ENCODE measurements at regions of chr15 and their contacts with region 1.

Region 1: GRCh38 chr15:68229386-68230156 is at the start of gene CLN6:
- DNase-seq: peak; percentile 73
- H3K4me3 Mint-ChIP-seq: peak within 1 kb of the TSS; percentile 94
- H3K27ac Mint-ChIP-seq: peak within 1 kb of the TSS; percentile 96
- H3K4me1 Mint-ChIP-seq: peaks cover 40% of the 10 kb centered on the region
- H3K27me3 Mint-ChIP-seq: no peaks in the 10 kb centered on the region
- total RNA-seq, gene CLN6: 95.3 and 98.3 TPM in 2 replicates

Region 2: DNA sequence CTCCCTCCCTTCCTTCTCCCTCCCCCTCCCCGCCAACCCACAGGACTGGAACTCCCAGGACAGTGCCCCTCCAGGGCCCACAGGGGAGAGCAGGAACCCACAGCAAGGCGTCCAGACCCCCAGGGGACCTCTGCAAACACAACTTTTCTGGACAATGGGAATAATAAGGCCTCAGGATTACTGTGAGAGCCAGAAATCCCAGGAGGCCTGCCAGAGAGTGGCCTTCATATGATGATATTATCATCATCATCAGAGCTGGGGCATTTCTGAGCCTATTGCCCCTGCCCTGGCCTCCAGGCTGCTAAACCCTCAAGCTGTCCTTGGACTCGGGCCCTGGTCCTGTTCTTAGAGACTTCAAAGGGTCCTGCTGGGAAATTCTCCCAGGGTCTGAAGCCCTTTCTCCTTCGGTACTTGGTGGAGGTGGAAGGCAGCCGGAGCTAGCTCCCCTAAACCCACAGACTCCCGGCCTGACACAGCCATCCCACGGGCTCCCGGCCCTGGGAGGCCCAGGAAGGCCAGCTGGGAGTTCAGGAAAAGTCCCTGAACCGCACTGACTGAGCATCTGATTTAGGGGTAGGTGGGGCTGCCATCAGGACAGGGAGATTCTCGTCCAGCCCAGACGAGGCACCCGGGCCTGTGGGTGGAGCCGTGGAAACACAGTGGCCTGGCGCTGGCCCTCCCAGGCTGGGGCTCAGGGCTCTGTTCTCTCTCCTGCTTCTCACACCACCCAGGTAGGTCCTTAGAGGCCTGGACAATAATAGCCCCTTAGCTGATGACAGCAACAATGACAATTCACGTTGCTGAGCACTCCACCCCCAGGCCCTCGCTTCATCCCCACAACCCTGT is 29.3 kb before region 1 on chr15:
- intact Hi-C with region 1: no loop called
- DNase-seq: no peak
- H3K4me3 Mint-ChIP-seq: no peak overlapping the region
- H3K27ac Mint-ChIP-seq: no peak overlapping the region
- H3K4me1 Mint-ChIP-seq: peaks cover 18% of the 10 kb centered on the region
- H3K27me3 Mint-ChIP-seq: no peaks in the 10 kb centered on the region

Region 3: GRCh38 chr15:68210821-68211655 is 18.5 kb before region 1 on chr15:
- intact Hi-C with region 1: loop called (anchors 2 kb)
- DNase-seq: peak; percentile 36
- H3K4me3 Mint-ChIP-seq: no peak overlapping the region
- H3K27ac Mint-ChIP-seq: no peak overlapping the region
- H3K4me1 Mint-ChIP-seq: peaks cover 35% of the 10 kb centered on the region
- H3K27me3 Mint-ChIP-seq: no peaks in the 10 kb centered on the region

Region 4: DNA sequence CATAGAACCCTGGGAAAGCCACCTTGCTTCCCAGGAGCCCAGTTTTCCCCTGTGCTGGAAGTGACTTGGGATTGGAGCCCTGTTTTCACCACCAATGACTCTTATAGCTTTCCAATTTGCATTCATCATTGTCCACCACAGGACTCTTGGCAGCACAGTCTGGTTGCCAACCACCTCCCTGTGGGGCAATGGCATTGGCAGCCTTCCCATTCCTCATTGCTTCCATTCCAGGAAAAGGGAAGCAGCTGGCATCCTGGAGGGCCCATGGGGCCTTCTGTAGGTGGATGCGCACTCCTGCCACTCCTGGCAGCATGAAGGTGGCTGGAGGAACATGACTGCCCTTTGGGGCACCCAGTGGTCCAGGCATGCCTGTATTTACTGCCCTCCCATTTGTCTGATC is 105.7 kb after region 1 on chr15:
- intact Hi-C with region 1: no loop called
- DNase-seq: no peak
- H3K4me3 Mint-ChIP-seq: no peak overlapping the region
- H3K27ac Mint-ChIP-seq: no peak overlapping the region
- H3K4me1 Mint-ChIP-seq: peaks cover 5% of the 10 kb centered on the region
- H3K27me3 Mint-ChIP-seq: peaks cover 12% of the 10 kb centered on the region

Region 5: DNA sequence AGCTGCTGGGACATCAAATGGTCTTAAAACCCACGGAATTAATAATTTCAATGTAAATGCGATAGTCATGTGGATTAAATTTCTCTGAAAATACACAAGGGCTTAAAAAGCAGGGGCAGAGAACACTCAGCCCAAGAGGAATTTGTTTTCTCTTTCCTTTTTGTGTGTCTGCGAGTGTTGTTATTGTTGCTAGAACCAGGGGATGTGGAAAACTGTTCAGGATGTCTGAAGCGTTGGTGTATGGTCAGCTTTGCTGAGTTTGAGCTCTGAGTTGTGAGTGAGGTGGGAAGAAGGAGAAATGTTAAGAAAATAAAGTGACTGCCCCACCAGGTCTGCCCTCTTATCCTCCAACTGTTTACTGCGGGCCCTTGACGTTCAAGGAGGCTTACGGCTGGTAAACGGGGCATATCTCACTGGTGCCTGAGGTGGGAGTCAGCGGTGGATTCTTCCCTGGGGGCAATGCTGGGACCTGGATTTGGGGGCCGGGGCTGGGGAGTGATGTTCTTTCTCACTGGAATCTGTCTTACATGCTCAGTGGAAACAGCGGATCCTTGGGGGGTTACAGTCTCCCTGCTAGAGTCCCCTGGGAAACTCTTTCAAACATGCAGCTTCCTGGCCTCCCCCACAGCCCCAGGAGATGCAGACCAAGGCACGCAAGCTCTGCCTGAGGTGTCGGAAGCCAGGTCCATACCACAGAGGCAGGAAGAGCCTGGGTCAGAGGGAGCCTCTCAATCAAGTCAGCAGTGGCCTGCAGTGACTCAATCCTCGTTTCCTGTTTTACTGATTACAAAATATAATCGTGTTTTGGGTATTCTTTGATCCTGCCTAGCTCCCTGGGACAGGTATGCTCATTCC is 160.6 kb after region 1 on chr15:
- intact Hi-C with region 1: no loop called
- DNase-seq: peak; percentile 16
- H3K4me3 Mint-ChIP-seq: no peak overlapping the region
- H3K27ac Mint-ChIP-seq: no peak overlapping the region
- H3K4me1 Mint-ChIP-seq: peaks cover 14% of the 10 kb centered on the region
- H3K27me3 Mint-ChIP-seq: peaks cover 25% of the 10 kb centered on the region